ENCODE measurements at regions of chr7 and their contacts with region 1.

Region 1: GRCh38 chr7:116340943-116341907 is 130.9 kb downstream of the TES start:
- DNase-seq: no peak
- H3K4me3 Mint-ChIP-seq: no peak overlapping the region
- H3K27ac Mint-ChIP-seq: no peak overlapping the region
- H3K4me1 Mint-ChIP-seq: peaks cover 7% of the 10 kb centered on the region
- H3K27me3 Mint-ChIP-seq: peaks cover 33% of the 10 kb centered on the region

Region 2: GRCh38 chr7:116087291-116087690 is 253.9 kb before region 1 on chr7:
- intact Hi-C with region 1: no loop called
- DNase-seq: no peak
- H3K4me3 Mint-ChIP-seq: no peak overlapping the region
- H3K27ac Mint-ChIP-seq: no peak overlapping the region
- H3K4me1 Mint-ChIP-seq: no peaks in the 10 kb centered on the region
- H3K27me3 Mint-ChIP-seq: no peaks in the 10 kb centered on the region

Region 3: GRCh38 chr7:116165717-116166116 is 175.5 kb before region 1 on chr7:
- intact Hi-C with region 1: no loop called
- DNase-seq: no peak
- H3K4me3 Mint-ChIP-seq: no peak overlapping the region
- H3K27ac Mint-ChIP-seq: no peak overlapping the region
- H3K4me1 Mint-ChIP-seq: peaks cover 13% of the 10 kb centered on the region
- H3K27me3 Mint-ChIP-seq: peaks cover 33% of the 10 kb centered on the region

Region 4: GRCh38 chr7:116258734-116259133 is 82.5 kb before region 1 on chr7:
- intact Hi-C with region 1: loop called (anchors 2 kb)
- DNase-seq: no peak
- H3K4me3 Mint-ChIP-seq: no peak overlapping the region
- H3K27ac Mint-ChIP-seq: no peak overlapping the region
- H3K4me1 Mint-ChIP-seq: peaks cover 9% of the 10 kb centered on the region
- H3K27me3 Mint-ChIP-seq: peaks cover 5% of the 10 kb centered on the region

Region 5: DNA sequence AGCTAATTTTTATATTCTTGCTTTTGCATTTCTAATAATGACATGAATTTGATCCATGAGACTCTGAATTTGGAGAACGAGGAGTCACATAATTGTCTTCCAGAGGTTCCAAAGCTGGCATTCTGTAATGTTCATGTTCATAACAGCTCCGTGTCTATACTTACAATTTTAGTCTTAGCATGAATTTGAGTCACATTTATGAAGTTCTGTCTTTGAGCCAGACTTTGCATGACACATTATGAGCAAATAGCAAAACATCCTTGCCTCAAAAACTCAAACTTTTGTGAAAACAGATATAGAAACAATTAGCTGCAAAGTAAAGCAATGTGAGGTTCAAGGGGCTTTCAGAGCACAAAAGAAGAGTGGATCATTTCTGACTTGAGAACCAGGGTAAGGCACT is 113.8 kb after region 1 on chr7:
- intact Hi-C with region 1: no loop called
- DNase-seq: no peak
- H3K4me3 Mint-ChIP-seq: no peak overlapping the region
- H3K27ac Mint-ChIP-seq: no peak overlapping the region
- H3K4me1 Mint-ChIP-seq: no peaks in the 10 kb centered on the region
- H3K27me3 Mint-ChIP-seq: no peaks in the 10 kb centered on the region

Measured in activated T-helper 2 cell treated with anti-CD3 and anti-CD28 coated beads, Interferon-gamma antibody, Interleukin-2, Interleukin-4, amounts not matched to agents 10 μg/mL and 5 μg/mL and 100 μg/mL, durations not matched to agents 14 hours and 24 hours and 36 hours (primary cell).